A549 (cell line): ENCODE measurements at regions of chr3 and their contacts with region 1.

Region 1: GRCh38 chr3:121545574-121546455 is at the start of gene POLQ:
- DNase-seq: peak; percentile 92 to 96
- ATAC-seq: peak; percentile 97 to 99
- H3K4me3 ChIP-seq: peak within 1 kb of the TSS; percentile 61
- H3K27ac ChIP-seq: peak within 1 kb of the TSS; percentile 71 to 90
- H3K4me1 ChIP-seq: peaks cover 11% of the 10 kb centered on the region; the same call in 2 of the 3 replicates
- CTCF ChIP-seq: no peak
- EP300 ChIP-seq: no peak
- POLR2A ChIP-seq: peak; percentile 48
- RAD21 ChIP-seq: no peak
- polyA plus RNA-seq, gene POLQ: 10.9 and 12.4 TPM in 2 replicates

Region 2: GRCh38 chr3:120801484-120801883 is 744.3 kb before region 1 on chr3:
- CTCF ChIA-PET with region 1: no interaction called
- POLR2A ChIA-PET with region 1: no interaction called
- DNase-seq: no peak
- ATAC-seq: no peak
- H3K4me3 ChIP-seq: no peak overlapping the region
- H3K27ac ChIP-seq: no peak overlapping the region
- H3K4me1 ChIP-seq: no peaks in the 10 kb centered on the region; the same call in 2 of the 3 replicates
- CTCF ChIP-seq: no peak
- EP300 ChIP-seq: no peak
- POLR2A ChIP-seq: no peak
- RAD21 ChIP-seq: no peak

Region 3: DNA sequence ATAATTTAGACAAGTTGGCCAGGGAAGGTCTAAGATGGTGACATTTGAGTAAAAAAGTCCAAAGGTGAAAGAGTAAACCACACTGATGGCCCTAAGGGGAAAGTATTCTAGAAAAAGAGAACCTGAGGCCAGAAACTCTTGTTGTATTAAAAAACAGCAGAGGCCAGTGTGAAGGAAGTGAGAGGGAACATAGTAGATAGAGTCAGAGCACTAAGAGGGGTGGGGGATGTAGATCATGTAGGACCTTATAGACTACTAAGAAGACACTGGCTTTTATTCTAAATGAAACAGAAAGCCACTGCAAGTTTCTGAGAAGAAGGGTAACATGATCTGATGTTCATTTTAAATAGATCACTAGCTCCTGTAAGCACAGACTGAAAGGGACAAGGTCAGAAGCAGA is 14.5 kb before region 1 on chr3:
- CTCF ChIA-PET with region 1: interaction called, 11 read pairs
- POLR2A ChIA-PET with region 1: no interaction called
- DNase-seq: no peak
- ATAC-seq: no peak
- H3K4me3 ChIP-seq: no peak overlapping the region
- H3K27ac ChIP-seq: no peak overlapping the region
- H3K4me1 ChIP-seq: no peaks in the 10 kb centered on the region
- CTCF ChIP-seq: no peak
- EP300 ChIP-seq: no peak
- POLR2A ChIP-seq: no peak
- RAD21 ChIP-seq: no peak

Region 4: DNA sequence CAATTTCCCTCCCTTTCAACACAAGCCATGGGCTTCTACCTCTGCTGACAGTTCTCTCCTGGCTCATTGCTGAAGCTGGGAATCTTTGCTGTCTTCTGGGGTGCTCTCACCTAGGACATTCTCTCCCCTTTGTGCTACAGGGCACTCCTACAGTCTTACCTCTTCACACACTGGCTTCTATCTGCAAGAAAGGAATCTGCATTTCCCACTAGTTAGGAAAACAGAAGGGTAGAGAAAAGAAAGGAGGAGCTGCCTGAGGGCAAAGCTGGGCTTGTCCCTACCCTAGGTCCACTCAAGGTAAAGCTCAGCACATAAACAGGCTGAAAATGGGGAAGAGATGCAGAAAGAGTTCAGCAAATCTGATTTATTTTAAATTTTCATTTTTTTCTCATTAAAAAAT is 16.3 kb after region 1 on chr3:
- CTCF ChIA-PET with region 1: interaction called, 17 read pairs
- POLR2A ChIA-PET with region 1: no interaction called
- DNase-seq: no peak
- ATAC-seq: peak in 1 of 2 experiments; percentile 19; a peak in 1 of 6 replicates
- H3K4me3 ChIP-seq: no peak overlapping the region
- H3K27ac ChIP-seq: no peak overlapping the region; a peak in 1 of 6 replicates
- H3K4me1 ChIP-seq: no peaks in the 10 kb centered on the region
- CTCF ChIP-seq: no peak
- EP300 ChIP-seq: no peak
- POLR2A ChIP-seq: no peak
- RAD21 ChIP-seq: no peak

Region 5: DNA sequence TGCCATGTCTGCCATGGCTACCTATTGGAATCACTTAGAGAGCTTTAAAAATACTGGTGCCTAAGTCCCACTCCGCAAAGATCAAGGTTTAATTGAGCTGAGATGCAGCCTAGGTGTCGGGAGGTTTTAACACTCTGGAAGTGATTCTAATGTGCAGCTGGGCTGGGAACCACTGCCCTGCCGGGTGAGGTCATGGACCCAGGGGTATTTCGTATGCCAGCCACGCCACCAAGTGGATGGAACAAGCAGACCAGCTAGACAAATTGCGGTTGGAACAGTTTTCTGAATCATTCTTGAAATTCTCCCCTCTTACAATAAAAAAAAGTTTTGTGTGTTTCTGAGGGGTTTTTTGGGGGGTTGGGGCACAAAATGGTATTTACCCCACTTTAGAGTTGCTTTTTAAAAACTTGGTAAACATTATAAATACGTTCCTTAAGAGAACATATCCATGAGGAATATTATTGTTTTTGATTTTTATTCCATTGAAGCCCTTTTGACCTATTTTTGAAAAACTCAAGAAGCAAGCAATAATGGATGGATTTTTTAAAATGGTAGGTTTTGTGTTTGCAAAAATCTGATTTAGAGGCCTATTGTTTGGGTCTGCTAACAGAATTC is 713.0 kb after region 1 on chr3:
- CTCF ChIA-PET with region 1: interaction called, 19 read pairs
- POLR2A ChIA-PET with region 1: no interaction called
- DNase-seq: peak; percentile 60 to 61
- ATAC-seq: peak; percentile 94 to 95
- H3K4me3 ChIP-seq: no peak overlapping the region
- H3K27ac ChIP-seq: no peak overlapping the region
- H3K4me1 ChIP-seq: no peaks in the 10 kb centered on the region
- CTCF ChIP-seq: peak; percentile 42; the same call in 2 of the 3 replicates
- EP300 ChIP-seq: no peak
- POLR2A ChIP-seq: no peak
- RAD21 ChIP-seq: peak; percentile 77 to 82